ENCODE measurements at regions of chr14 and their contacts with region 1.

Region 1: DNA sequence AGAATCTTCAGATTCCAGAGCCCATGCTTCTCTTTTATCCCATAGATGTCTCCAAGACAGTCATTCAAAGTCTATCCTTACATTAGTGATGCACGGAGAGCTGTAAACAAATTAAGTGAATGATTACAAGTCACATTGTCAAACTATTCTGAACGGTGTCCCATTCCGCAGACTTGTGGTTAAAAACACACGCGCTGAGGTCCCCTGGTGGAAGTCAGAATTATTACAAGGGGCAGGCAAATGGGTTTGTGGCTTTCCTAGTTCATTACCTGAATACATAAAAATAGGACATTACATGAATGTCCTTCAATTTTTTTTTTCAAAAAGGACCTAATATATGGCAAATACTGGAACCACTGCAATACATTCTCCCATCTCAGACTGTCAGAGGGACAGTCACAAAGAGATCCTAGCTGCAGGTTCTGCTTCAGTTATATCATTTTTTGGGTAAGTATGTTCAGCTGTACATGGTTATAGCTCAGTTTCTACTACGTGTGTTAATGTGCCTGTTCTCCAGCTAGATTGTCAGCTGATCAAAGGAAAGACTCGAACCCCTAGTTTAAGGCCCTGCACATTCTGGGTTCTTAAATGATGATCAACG is 53.1 kb upstream of the STON2 start:
- DNase-seq: peak; percentile 66
- H3K4me3 ChIP-seq: no peak overlapping the region
- H3K27ac ChIP-seq: no peak overlapping the region
- H3K4me1 ChIP-seq: peaks cover 22% of the 10 kb centered on the region
- CTCF ChIP-seq: peak; percentile 91

Region 2: DNA sequence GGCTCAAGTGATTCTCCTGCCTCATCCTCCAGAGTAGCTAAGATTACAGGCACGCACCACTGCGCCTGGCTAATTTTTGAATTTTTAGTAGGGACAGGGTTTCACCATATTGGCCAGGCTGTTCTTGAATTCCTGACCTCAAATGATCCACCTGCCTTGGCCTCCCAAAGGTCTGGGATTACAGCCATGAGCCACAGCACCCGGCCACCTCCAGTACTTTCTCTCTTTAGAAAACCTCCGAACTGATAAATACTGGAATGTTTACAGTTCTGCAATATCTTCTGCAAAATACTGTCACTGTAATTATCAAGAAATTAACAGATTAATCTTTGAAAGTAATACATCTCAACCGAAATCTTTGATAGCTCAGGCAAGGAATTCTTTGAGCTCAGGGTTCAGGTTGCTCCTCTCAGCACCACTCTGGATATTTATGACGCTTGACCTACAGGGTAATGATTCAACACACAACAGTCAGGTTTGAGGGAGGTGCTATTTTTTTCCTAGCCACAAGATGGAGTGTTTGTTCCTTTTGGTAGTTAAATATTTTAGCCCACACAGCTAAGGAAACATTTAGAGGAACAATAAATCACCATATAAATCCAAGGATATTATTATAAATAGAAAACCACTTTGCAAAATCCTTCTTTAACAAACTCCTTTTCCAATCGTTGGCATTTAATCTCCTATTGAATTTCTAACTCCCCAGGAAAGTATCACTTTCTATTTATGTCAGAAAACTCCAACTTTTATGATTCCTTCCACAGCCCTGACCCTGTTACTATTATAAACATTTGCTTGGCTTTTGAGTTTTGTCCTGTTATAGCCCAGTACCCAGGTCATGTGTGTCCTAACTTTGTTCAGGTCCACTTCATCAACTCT is 183.9 kb before region 1 on chr14:
- CTCF ChIA-PET with region 1: interaction called, 4 read pairs
- POLR2A ChIA-PET with region 1: interaction called, 6 read pairs
- intact Hi-C with region 1: loop called (anchors 1 kb)
- DNase-seq: peak; percentile 71
- H3K4me3 ChIP-seq: no peak overlapping the region
- H3K27ac ChIP-seq: no peak overlapping the region
- H3K4me1 ChIP-seq: peaks cover 26% of the 10 kb centered on the region
- CTCF ChIP-seq: peak; percentile 94